ENCODE measurements at regions of chr5 and their contacts with region 1.

Region 1: DNA sequence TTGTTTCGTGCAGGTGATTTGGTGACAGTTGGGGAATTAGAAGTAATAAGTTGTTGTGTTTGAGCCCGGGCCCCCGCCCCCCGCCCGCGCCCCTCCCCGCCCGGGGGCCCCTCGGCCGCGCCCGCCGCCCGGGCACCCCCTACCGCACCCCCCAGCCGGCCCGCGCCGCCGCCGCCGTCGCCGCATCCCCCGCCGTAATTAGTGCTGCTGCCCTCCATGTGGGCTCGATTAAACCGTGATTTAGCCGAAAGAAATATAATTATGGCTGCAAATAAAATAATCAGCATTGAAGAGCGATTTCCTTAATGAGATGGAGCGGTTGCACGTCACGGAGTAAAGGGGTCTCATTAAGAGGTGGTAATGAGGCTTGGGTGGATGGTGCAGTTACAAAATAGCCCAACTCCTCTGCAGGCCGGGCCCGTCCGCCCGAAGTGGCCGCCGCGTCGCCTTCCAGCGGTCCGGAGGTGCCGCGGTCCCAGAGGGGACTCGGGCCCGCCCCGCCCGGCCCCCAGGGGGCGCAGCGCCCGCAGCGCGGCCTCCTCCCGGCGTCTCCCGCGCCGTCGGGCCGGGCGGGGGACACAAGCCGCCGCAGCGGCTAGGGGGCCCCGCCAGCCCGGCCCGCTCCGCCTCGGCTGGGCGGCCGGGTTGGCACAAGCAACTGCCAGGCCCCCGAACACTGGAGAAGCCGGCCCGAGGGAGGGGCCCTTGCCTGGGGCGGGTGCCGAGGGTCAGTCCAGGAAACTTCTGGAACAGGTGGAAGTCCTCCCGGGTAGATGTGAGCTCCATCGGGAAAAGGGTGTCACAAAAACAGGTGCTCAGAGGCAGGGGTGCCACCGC is 6.9 kb upstream of the OTP start:
- DNase-seq: no peak
- ATAC-seq: peak; percentile 54

Region 2: DNA sequence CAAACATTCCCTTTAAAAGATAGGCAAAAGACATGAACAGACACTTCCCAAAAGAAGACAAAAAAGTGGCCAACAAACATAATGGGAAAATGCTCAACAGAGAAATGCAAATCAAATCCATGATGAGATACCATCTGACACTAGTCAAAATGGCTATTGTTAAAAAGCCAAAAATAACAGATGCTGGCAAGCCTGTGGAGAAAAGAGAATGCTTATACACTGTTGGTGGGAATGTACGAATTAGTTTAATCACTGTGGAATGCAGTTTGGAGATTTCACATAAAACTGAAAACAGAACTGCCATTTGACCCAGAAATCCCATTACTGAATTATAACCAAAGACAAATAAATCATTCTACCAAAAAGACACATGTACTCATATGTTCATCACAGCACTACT is 95.0 kb before region 1 on chr5:
- intact Hi-C with region 1: no loop called
- DNase-seq: no peak
- ATAC-seq: no peak

Region 3: DNA sequence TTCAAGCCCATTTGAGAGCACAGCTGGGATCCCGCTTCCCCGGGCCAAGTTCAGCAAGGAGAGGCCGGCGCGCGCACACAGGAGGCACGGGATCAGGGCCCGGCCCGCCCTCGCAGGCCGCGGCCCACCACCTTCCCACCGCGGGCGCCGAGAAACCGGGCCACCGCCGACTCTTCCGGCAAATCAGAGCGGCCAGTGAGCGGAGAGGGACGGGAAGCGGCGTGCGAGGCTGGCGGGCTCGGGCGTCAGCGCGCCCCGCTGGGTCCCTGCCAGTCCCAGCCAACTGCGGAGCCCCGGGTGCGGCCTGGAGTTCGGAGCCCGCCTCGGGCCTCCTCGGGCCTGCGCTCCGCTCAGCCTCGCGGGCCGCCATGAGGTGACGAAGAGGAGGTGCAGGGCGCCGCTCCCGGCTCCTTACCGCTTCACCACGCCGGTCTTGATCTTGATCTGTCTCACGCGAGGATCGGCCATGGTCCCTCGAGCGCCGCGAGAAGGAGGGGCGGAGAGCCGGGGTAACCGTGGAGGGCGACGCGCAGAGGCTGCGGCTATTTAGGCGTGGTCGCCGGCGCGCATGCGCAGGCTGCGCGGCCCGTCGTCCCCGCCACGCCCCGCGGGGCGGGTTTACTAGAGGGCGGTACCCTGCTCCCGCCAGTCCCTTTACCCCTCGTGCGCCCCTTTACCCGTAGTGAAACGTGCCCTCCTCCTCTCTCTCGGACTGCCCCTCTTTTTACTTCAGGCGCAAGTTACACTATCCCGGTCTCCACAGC is 130.6 kb after region 1 on chr5 and contains the start of gene TBCA:
- intact Hi-C with region 1: loop called (anchors 10 kb)
- DNase-seq: peak; percentile 95
- ATAC-seq: peak; percentile 99
- total RNA-seq, gene TBCA: 122 TPM

Region 4: DNA sequence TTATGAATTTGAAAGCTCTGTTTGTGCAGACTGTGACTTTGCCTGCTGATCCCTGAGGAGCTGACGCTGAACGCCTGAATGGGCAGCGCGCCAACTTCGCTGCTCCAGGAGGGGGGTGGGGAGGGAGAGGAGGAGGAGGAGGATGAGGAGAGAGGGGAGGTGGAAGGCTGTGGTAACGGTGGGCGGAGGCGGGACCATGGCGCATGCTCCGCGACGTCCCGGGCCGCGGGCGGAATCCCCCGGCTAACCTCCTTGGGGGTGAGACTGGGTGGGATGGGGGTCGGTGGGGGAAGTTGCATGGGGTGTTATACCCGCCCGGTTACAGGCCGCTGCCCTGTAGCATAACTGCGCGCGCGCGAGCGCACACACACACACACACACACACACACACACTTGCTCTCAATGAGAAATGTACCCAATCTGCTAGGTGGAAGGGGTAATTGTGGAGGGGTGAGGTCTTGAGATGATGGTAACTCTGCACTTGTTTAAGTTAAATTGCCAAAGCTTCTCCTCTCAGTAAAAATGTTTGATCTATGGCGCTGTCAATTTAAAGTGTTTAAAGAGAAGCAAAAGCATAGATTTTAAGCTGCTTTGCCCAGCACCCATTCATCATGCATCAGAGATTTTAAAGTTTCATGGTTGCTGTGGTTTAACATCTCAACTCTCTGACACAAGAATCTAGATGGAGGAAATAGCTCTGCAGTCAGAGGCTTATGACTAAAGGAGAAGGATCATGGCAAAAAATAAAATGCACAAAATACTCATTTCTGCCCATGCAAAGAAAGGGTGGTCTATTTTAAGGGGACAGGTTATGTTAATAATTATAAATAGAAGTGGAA is 207.4 kb after region 1 on chr5:
- intact Hi-C with region 1: loop called (anchors 10 kb)
- DNase-seq: peak; percentile 80
- ATAC-seq: peak; percentile 84

Region 5: DNA sequence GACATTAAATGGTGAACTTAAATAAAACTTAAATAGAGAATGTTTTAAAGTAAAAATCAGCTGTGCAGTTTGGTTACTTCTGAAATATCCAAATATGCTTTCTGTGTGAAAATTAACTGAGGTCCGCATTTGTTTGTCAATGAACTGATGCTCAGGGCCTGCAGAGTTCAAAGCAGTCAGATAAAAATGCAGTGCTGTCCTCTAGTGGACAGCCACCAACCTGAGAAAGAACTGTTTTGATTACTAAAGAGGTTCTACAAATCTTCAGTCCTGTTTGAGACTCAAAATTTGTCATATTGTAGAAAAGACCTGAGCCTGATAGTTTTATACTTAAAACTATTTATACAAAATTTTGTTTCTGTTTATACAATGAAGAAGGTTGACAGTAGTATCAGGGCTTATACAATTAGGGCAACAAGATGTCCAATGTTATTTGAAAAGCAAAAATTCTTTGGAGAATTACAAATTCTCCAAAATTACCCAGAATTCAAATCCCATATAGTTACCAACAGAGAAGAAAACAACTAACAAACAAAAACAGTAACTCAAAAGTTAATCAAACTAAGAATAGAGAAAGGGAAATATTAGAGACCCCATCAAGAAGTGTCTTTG is 363.1 kb after region 1 on chr5:
- intact Hi-C with region 1: loop called (anchors 5 kb)
- DNase-seq: no peak
- ATAC-seq: no peak

Region 6: GRCh38 chr5:78162253-78162862 is 517.0 kb after region 1 on chr5:
- intact Hi-C with region 1: loop called (anchors 5 kb)
- DNase-seq: no peak
- ATAC-seq: no peak